ENCODE measurements at regions of chr3 and their contacts with region 1.

Region 1: GRCh38 chr3:172749221-172749965 is 1.1 kb upstream of the ECT2 start:
- DNase-seq: no peak
- H3K4me3 ChIP-seq: peak overlapping the region; percentile 70 to 88 (median 82)
- H3K27ac ChIP-seq: peak overlapping the region; percentile 70 to 84 (median 82)
- H3K4me1 ChIP-seq: peaks cover 0 to 24% (median 20%) of the 10 kb centered on the region in 4 donors
- H3K27me3 ChIP-seq: no peaks in the 10 kb centered on the region
- CTCF ChIP-seq: no peak
- EP300 ChIP-seq: no peak
- POLR2A ChIP-seq: no peak

Region 2: DNA sequence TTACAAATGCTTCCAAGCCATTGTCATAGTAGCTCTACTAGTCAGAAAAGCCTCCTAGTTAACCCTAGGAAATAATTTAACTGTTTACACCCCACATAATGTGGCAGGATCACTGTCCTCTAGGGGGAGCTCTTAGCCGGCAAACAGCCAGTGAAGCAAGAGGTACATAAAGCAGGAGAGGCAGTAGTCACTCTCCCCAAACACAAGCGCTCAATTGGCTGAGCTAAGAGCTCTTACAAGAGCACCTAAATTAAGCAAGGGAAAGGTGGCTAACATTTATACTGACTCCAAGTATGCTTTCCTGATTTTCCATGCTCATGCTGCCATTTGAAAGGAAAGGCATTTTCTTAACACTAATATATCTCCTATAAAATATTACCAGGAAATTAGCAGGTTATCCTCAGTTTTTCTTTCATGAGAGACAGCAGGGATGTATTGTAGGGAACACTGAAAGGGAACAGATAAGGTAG is 76.1 kb before region 1 on chr3:
- intact Hi-C with region 1: loop called (anchors 5 kb)
- DNase-seq: no peak
- H3K4me3 ChIP-seq: no peak overlapping the region
- H3K27ac ChIP-seq: no peak overlapping the region
- H3K4me1 ChIP-seq: peaks cover 30 to 58% (median 41%) of the 10 kb centered on the region in 4 donors
- H3K27me3 ChIP-seq: no peaks in the 10 kb centered on the region
- CTCF ChIP-seq: peak; percentile 65 to 75 (median 67)
- EP300 ChIP-seq: no peak
- POLR2A ChIP-seq: no peak

Region 3: GRCh38 chr3:172710664-172711453 is 38.5 kb before region 1 on chr3 and contains the start of gene NCEH1:
- intact Hi-C with region 1: loop called (anchors 5 kb)
- DNase-seq: peak; percentile 96
- H3K4me3 ChIP-seq: peak within 1 kb of the TSS; percentile 76 to 92 (median 84)
- H3K27ac ChIP-seq: peak within 1 kb of the TSS; percentile 90 to 97 (median 93)
- H3K4me1 ChIP-seq: peaks cover 17 to 36% (median 27%) of the 10 kb centered on the region in 4 donors
- H3K27me3 ChIP-seq: no peaks in the 10 kb centered on the region
- CTCF ChIP-seq: peak; percentile 78 to 86 (median 81)
- EP300 ChIP-seq: no peak
- POLR2A ChIP-seq: peak; percentile 57
- total RNA-seq, gene NCEH1: 3.0 to 11.6 (median 3.7) TPM

Region 4: GRCh38 chr3:172808969-172809546 is 59.7 kb after region 1 on chr3:
- intact Hi-C with region 1: no loop called
- DNase-seq: no peak
- H3K4me3 ChIP-seq: no peak overlapping the region
- H3K27ac ChIP-seq: no peak overlapping the region
- H3K4me1 ChIP-seq: no peaks in the 10 kb centered on the region
- H3K27me3 ChIP-seq: no peaks in the 10 kb centered on the region
- CTCF ChIP-seq: peak in 2 of 3 experiments; percentile 24 to 30
- EP300 ChIP-seq: no peak
- POLR2A ChIP-seq: no peak

Region 5: GRCh38 chr3:172939651-172940293 is 190.4 kb after region 1 on chr3:
- intact Hi-C with region 1: no loop called
- DNase-seq: no peak
- H3K4me3 ChIP-seq: no peak overlapping the region
- H3K27ac ChIP-seq: no peak overlapping the region
- H3K4me1 ChIP-seq: no peaks in the 10 kb centered on the region
- H3K27me3 ChIP-seq: no peaks in the 10 kb centered on the region
- CTCF ChIP-seq: no peak
- EP300 ChIP-seq: no peak
- POLR2A ChIP-seq: no peak

Measured in esophagus muscularis mucosa (tissue), 4 donors.